ENCODE measurements at regions of chr11 and their contacts with region 1.

Region 1: DNA sequence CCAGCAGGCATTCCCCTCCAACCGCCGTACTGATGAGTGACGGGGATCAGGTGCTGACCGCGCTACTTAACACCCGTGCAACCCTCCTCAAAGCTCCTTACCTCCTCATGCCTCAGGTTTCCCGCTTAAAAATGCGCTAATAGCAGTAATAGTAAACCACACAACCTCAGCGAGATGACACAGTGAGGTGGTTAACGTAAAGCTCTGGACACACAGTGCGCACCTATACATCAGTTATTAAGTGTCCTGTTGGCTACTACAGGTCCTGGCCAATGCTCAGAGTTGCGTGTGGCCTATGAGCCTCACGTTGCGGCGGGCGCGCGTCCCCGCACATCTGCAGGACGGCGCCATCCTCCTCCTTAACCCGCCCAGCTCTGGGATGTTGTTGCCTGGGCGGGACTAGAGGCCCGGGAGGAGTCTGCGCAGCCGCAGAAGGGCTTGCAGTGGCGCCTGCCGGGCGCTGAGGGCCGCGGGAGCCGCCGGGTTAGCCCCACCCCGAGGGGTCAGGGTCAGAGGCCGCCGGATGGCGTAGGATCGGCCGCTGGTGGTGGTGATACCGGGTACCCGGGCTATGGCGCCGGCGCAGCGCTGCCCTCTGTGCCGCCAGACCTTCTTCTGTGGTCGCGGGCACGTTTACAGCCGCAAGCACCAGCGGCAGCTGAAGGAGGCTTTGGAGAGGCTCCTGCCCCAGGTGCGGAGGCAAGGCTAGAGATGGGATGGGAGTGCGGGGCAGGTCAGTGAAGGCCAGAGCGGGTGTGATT is at the start of gene CENATAC:
- DNase-seq: peak; percentile 94 to 99 (median 96)
- H3K4me3 ChIP-seq: peak within 1 kb of the TSS; percentile 64 to 100 (median 95)
- H3K27ac ChIP-seq: peak within 1 kb of the TSS in 58 of 59 donors; percentile 4 to 93 (median 82)
- H3K27me3 ChIP-seq: no peaks in the 10 kb centered on the region
- CTCF ChIP-seq: peak in 45 of 56 donors; percentile 10 to 67 (median 43)
- total RNA-seq, gene CENATAC: 37.7 to 109 (median 64.9) TPM

Region 2: DNA sequence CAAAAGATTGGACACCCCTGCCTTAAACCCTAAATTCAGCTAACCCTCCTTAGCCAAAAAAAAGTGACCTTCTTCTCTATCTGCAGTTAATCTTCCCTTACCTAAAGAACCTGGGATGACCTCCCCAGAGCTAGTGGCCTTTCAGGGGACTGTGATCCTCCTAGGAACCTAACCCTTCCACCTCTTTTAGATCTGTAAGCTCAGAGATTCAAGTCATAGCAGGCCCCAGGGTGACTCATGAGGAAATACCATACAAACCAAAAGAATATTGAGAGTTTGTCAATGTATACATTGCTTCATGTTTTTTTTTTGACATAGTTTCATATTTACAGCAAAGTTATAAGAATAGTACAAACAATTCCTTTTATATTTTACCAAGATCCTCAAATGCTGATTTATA is 152.4 kb before region 1 on chr11:
- intact Hi-C with region 1: no loop called
- DNase-seq: no peak
- H3K4me3 ChIP-seq: no peak overlapping the region
- H3K27ac ChIP-seq: no peak overlapping the region
- H3K27me3 ChIP-seq: no peaks in the 10 kb centered on the region
- CTCF ChIP-seq: no peak

Region 3: DNA sequence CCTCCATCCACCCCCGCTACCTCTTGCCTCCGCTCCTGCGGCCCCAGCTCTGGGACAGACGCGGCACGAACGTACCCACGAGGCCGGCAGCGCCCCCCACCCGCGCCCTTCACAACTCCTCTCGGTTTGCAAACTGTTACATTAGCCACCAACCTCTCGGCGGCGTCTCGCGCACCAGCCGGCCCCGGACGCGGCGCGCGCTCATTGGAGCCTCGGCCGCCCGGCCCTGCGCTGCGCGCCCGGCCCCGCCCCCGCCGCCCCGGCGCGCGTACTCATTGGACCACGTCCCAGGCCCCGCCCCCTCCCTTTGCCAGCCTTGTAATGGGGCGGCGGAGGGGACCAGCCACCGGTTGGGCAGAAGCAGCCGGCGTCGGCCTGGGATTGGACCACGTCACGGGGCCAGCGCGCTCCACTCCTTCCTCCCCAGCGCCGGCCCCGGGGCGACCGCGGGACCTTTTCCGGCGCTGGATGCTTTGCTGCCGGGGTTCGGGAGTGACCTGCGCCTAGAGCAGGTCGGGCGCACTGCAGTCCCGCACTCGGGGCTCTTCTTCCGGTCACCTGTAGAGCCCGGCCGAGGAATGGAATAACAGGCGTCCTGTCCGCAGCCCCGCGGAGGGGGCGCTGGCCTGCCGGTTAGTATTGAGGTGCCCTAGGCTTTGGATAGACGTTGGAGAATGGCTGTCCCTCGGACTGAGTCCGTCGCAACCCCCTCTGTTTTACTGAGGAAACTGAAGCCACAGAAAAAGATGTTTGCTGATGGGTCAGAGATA is 59.4 kb after region 1 on chr11 and contains the start of gene HYOU1:
- intact Hi-C with region 1: loop called in 1 of 2 experiments (anchors 5 kb)
- DNase-seq: peak; percentile 95 to 98 (median 96)
- H3K4me3 ChIP-seq: peak within 1 kb of the TSS; percentile 69 to 100 (median 94)
- H3K27ac ChIP-seq: peak within 1 kb of the TSS in 58 of 59 donors; percentile 14 to 95 (median 84)
- H3K27me3 ChIP-seq: no peaks in the 10 kb centered on the region
- CTCF ChIP-seq: peak in 33 of 56 donors; percentile 2 to 59 (median 28)
- total RNA-seq, gene HYOU1: 94.9 to 199 (median 139) TPM

Region 4: DNA sequence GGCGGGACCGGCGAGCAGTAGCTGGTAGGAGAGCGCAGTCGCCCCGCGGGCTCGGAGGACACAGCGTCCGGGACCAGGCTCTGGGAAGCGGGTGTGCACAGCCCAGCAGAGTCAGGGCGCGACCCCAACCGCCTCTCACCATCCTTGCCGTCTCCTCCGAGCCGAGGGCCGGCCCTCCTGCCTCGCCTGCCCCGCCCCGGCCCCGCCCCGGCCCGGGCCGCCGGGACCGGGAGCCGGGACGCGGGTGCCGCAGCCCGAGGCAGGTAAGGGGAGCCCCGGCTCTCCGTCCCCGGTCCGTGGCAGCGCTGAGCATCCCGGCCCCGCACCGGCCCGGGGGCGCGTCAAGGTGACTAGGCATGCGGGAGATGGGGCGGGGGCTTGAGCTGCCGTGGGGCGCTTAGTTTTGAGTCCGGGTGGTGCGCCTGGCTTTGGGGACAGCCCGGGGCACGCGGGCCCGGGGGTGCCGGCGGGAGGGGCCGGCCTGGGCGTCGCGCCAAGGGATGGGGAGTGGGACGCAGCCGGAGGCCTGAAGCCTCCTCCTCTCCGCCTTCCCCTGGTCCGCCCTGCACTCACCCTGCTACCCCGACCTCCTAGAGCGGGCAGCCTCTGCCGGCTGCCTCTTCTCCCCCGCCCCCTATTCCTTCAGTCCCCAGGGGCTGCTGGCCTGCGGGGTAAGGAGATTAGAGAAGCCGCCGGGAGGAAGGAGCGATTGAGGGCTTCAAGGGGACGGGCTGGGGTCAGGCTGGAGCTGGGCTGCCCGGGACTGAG is 151.4 kb after region 1 on chr11 and contains the start of gene ABCG4:
- intact Hi-C with region 1: no loop called
- DNase-seq: peak in 3 of 10 donors; percentile 18 to 62 (median 56)
- H3K4me3 ChIP-seq: peak within 1 kb of the TSS; percentile 52 to 85 (median 71)
- H3K27ac ChIP-seq: peak within 1 kb of the TSS in 21 of 59 donors; percentile 3 to 71 (median 39)
- H3K27me3 ChIP-seq: no peaks in the 10 kb centered on the region
- CTCF ChIP-seq: no peak
- total RNA-seq, gene ABCG4: 5.2 to 31.5 (median 18.1) TPM

Measured in dorsolateral prefrontal cortex (tissue), 120 donors.